ENCODE measurements at regions of chr7 and their contacts with region 1.

Region 1: DNA sequence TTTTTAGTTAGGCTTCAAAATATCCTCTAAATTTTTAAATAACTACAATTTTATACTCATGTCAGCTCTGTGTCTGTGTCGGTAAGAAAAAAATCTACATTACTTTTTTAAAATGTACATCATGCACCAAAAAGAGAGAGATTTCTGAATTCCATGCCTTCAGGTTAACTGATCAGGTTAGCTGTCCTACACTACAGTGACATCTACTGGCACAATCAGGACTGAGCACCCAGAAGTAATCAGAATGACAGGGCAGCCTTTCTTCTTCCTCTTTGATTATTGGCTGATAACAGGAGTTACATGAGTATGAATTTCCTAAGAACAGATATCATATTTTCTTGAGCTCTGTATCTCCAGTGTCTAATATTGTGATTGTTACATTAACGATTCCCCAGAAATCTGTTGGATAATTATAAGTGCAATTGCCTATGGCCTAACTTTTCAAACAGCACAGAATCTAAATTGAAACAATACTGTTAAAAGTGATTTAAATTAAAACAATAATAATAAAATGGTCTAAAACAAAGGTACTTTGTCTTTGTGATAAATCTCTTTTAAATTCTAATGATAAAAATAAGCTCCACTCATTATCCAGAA is 41.8 kb upstream of the HYCC1 start:
- ATAC-seq: peak; percentile 35 to 90 (median 64)
- H3K4me3 ChIP-seq: no peak overlapping the region
- H3K27ac ChIP-seq: no peak overlapping the region
- H3K4me1 ChIP-seq: peaks cover 0 to 3% of the 10 kb centered on the region in 2 donors

Region 2: DNA sequence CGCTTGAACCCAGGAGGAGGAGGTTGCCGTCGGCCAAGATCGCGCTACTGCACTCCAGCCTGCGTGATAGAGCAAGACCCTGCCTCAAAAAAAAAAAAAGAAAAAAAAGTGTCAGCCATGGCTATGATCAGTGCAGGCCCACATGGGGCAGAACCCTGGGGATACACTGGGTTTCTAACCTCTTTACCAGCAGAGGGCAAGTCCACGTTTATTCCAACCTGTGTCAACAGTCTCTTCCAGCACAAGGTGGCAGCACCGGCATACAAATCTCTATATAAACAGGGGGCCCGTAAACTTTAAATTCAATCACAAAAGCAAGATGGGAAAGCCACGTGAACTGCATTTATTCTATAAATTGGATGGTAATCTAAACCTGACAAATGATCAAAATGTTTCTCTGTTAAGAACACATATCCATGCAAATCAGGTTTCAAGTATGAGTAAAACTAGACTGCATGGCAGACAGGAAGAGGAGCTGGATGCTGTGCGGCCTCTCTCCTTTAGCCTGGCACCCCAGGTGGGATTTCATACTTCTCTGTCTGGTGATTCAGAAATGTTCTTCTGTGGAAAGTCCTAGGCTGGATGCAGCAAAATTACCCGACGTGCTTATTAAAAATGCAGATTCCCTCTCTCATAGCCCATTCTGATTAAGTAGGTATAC is 495.7 kb before region 1 on chr7:
- in situ Hi-C with region 1: loop called (anchors 10 to 25 kb)
- ATAC-seq: peak; percentile 46 to 85 (median 72)
- H3K4me3 ChIP-seq: no peak overlapping the region
- H3K27ac ChIP-seq: no peak overlapping the region
- H3K4me1 ChIP-seq: peaks cover 18 to 30% of the 10 kb centered on the region in 2 donors

Region 3: DNA sequence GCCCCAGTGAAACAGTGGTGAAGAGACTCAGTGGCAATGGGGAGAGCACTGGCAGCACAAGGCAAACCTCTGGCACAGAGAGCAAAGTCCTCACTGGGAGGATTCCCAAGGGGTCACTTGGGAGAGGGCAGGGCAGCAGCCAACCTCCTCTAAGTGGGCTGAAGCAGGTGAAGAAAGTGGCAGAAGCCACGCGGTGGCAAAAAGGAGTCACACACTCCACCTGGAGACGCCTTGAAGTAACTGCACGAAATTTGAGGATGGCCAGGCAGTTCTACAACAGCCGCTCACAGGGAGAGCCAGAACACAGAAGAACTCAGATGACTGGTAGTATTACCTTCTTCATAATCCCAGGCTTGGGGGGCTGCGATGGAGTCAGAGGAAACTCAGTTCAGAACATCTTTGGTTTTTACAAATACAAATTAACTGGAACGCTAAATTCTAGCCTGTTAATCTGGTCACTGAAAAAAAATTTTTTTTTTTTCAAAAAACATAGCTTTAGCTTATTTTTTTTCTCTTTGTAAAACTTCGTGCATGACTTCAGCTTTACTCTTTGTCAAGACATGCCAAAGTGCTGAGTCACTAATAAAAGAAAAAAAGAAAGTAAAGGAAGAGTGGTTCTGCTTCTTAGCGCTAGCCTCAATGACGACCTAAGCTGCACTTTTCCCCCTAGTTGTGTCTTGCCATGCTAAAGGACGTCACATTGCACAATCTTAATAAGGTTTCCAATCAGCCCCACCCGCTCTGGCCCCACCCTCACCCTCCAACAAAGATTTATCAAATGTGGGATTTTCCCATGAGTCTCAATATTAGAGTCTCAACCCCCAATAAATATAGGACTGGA is 329.1 kb before region 1 on chr7:
- in situ Hi-C with region 1: loop called in 1 of 9 experiments (anchors 25 kb)
- ATAC-seq: peak in 4 of 8 experiments; percentile 53 to 80 (median 72)
- H3K4me3 ChIP-seq: no peak overlapping the region
- H3K27ac ChIP-seq: no peak overlapping the region
- H3K4me1 ChIP-seq: peaks cover 0 to 2% of the 10 kb centered on the region in 2 donors

Region 4: DNA sequence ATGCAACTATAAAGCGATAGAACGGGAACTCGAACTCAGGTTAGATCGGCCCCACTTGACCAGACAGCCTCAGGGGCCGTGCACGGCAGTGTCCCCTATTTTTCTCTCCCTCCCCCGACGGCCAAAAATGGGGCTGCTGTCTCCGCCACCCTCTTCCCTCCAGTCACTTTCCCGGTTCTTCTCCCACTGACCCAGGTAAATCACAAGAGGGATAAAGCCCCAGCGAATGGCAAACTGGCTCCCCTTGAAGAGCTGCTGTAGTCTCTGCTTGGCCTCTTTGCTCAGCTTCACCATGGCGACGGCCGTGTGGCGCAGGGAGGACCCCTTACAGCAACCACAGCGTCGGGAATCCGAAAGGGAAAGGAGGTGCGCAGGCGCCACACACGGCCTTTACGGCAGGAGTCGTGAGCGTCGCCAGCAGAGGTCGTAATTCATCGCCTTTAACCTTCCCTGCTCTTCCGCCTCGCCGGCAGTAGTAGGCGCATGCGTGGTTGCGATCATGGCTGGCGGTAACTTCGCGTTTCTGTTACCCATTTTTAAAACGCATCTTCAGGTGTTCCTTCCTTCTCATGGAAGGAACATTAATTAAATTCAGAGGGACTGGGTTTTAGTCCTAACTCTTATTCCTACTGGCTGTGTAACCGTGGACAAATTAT is 233.1 kb before region 1 on chr7 and contains the start of gene TOMM7:
- in situ Hi-C with region 1: no loop called
- ATAC-seq: peak; percentile 88 to 99 (median 97)
- H3K4me3 ChIP-seq: peak within 1 kb of the TSS; percentile 66 to 87 (median 75)
- H3K27ac ChIP-seq: peak within 1 kb of the TSS; percentile 74 to 85
- H3K4me1 ChIP-seq: peaks cover 14 to 17% of the 10 kb centered on the region in 2 donors
- total RNA-seq, gene TOMM7: 153 to 386 (median 246) TPM

Region 5: GRCh38 chr7:22854158-22855048 is 201.3 kb before region 1 on chr7:
- in situ Hi-C with region 1: loop called in 1 of 9 experiments (anchors 25 kb)
- ATAC-seq: peak; percentile 67 to 91 (median 82)
- H3K4me3 ChIP-seq: peak overlapping the region; percentile 28 to 39 (median 33)
- H3K27ac ChIP-seq: peak overlapping the region in 1 of 2 donors; percentile 47
- H3K4me1 ChIP-seq: peaks cover 0 to 4% of the 10 kb centered on the region in 2 donors

Measured in motor neuron (in vitro differentiated cells).